ENCODE measurements at regions of chr1 and their contacts with region 1.

Region 1: GRCh38 chr1:22889213-22889827 is 83.3 kb downstream of the LACTBL1 start:
- DNase-seq: peak in 1 of 10 donors; percentile 42
- H3K4me3 ChIP-seq: no peak overlapping the region
- H3K27ac ChIP-seq: peak overlapping the region in 1 of 59 donors; percentile 14
- H3K27me3 ChIP-seq: no peaks in the 10 kb centered on the region
- CTCF ChIP-seq: peak; percentile 66 to 91 (median 81)

Region 2: DNA sequence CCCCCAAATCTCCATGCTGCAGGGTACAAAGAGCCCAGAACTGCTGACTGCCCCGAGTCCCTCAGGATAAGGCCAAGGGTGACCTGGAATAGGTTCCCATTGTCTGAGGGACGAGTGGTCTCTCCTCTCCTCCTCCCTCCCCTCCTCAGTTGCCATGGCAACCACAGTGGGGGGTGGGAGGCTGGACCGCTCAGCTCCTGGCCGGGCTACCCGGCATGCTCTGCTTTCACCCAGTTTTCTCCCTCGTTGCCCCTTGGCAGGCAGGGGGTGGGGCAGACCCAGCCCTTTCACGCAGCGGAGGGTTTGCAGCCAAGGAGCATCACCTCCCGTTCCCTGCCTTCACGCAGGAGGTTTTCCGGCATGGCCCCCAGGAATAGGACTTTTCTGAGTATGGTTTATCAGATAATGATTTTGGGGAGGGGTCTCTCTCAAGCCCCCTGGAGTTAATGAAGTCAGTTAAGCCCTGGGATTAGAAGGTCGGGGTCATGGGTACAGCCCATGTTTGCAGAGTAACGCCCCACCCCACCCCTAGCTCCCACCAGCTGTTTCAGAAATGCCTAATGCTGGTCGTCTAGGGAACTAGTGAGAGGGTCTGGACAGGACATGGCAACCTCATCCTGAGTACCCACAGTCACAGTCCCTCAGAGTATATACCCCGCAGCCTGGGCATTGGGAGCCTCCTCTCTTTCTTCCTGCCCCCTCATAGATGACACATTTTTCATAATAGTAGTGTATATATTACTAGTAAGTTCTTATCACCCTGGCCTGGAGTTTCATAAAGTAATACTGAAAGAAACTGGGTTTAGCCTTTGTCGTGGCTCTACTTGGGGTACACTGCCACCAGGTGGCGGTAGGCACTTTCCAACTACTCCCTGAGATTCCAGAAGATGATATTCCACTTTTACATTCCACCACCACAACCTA is 215.6 kb before region 1 on chr1:
- intact Hi-C with region 1: loop called in 1 of 2 experiments (anchors 5 kb)
- DNase-seq: peak; percentile 23 to 82 (median 64)
- H3K4me3 ChIP-seq: no peak overlapping the region
- H3K27ac ChIP-seq: no peak overlapping the region
- H3K27me3 ChIP-seq: peaks cover 0 to 19% (median 0%) of the 10 kb centered on the region in 45 donors
- CTCF ChIP-seq: peak; percentile 58 to 93 (median 79)

Region 3: DNA sequence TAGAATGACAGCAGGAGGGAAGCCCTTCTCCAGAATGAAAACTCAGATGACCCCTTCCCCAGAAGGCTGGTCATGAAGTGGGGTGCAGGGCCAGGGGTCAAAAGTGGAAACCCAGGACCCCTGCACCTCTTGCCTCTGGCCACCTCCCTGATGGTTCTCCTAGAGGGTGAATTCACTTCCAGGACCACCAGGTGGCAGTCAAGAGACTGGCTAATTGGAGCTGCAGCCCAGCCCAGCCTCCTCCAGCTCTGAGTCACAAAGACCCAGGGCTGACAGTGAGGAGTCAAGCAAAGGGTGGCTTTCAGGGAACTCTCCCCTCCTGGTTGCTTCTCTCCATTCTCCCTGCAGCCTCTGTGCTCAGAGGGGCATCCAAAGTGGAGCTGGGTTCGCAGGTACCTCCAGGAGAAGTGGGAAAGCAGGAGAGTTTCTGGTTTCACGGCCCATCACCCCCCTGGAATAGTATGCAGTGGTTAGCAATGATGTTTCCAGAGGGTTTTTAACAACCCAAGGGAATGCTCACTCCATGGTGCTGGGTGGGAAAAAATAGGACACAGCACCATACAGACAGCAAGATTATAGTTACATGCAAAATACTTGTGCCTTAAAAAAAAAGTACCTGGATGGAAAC is 184.8 kb before region 1 on chr1:
- intact Hi-C with region 1: loop called in 1 of 2 experiments (anchors 2 kb)
- DNase-seq: peak; percentile 66 to 95 (median 90)
- H3K4me3 ChIP-seq: no peak overlapping the region
- H3K27ac ChIP-seq: peak overlapping the region in 2 of 59 donors; percentile 4 to 57
- H3K27me3 ChIP-seq: no peaks in the 10 kb centered on the region
- CTCF ChIP-seq: peak; percentile 75 to 99 (median 95)

Region 4: DNA sequence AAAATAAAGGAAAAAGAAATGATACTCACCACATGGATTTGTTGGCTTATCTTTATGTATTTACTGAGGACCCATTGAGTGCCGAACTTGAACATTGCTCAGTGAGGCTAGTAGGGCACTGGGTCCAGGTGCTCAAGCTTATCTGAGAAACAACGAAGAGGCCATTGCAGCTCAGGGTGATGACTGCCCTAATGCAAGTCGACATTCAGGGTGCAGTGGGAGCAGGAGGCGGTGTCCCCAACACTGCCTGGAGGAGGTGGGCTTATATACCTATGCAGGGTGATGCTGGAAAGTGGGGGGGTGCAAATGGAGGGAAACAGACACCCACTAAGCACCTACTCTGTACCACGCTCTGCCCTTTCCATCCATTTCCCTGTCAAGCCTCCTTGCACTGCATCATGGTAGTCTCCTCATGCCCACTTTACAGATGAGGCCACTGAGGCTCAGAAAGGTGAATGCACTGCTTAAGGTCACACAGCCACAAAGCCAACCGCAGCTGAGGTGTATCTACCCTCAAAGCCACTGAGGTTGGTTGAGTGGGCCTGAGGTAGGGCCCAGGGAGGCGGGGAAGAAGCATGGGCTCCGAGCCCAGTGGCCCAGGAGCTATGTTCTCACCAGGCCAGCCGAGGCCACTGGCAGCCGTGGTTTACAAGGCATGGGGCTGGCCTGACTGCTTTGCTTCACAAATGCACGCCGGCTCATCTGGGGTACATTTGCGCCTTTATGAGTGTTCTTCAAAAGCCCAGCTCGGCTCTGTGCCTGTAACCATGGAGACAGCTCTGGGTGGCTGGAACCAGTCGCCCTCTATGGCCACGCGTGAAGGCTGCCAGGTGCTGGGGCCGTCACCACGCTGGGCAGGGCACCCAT is 74.9 kb before region 1 on chr1:
- intact Hi-C with region 1: loop called in 1 of 2 experiments (anchors 5 kb)
- DNase-seq: peak; percentile 35 to 88 (median 80)
- H3K4me3 ChIP-seq: no peak overlapping the region
- H3K27ac ChIP-seq: peak overlapping the region; percentile 21 to 84 (median 74)
- H3K27me3 ChIP-seq: no peaks in the 10 kb centered on the region
- CTCF ChIP-seq: peak in 3 of 56 donors; percentile 11 to 31 (median 20)

Region 5: GRCh38 chr1:22861764-22862440 is 27.4 kb before region 1 on chr1:
- intact Hi-C with region 1: loop called in 1 of 2 experiments (anchors 2 kb)
- DNase-seq: peak in 6 of 10 donors; percentile 49 to 73 (median 63)
- H3K4me3 ChIP-seq: no peak overlapping the region
- H3K27ac ChIP-seq: peak overlapping the region in 33 of 59 donors; percentile 10 to 85 (median 49)
- H3K27me3 ChIP-seq: no peaks in the 10 kb centered on the region
- CTCF ChIP-seq: peak; percentile 71 to 98 (median 87)